Head of caudate nucleus (tissue), 42 donors: ENCODE measurements at regions of chr6 and their contacts with region 1.

Region 1: DNA sequence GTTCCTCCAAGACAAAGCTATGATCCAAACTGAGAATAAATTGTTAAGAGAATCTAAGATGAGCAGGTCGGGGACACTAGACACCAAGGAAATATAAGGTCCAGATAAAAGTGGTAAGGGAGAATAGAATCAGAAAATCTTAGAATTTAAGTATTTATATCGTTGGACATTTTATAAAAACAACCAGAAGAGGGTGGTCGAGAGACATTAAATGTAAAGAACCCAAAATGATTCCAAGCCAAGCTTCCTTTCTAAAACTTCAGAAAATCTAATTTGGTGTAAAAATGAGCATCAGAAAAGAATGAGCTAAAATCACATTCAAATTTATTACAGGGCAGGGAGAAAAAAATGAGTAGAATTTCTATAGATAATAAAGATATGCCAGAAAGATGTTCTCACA is 97.8 kb upstream of the OGFRL1 start:
- DNase-seq: no peak

Region 2: DNA sequence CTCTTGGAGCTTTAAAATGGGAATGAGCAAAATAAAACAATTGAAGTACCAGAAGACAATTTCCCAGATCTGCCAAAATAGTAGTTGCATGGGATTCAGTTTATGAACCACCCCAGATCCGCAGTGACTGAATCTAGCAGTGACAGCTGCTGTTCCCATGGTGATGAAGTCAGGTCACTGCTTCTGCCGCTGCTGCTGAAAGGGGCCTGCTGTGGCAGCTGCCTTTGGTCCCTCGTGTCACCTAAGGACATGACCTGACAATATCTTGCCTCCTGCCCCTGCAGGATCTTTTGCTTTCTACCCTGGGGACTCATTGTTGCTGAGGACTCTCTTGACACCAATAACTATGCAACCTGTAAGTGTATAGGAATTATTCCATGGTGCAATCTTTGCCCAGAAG is 63.5 kb after region 1 on chr6:
- intact Hi-C with region 1: no loop called
- DNase-seq: peak in 6 of 42 donors; percentile 13 to 48 (median 22)

Region 3: GRCh38 chr6:71349395-71349794 is 158.6 kb after region 1 on chr6:
- intact Hi-C with region 1: loop called (anchors 10 kb)
- DNase-seq: no peak